Activated CD4-positive, alpha-beta T cell treated with anti-CD3 and anti-CD28 coated beads, Interleukin-2, amount 10 ng/mL, durations not matched to agents 24 days and 14 days (primary cell): ENCODE measurements at regions of chr14 and their contacts with region 1.

Region 1: GRCh38 chr14:71478542-71478941 is 453.7 kb upstream of the RGS6 start:
- DNase-seq: peak; percentile 77
- H3K4me3 Mint-ChIP-seq: peak overlapping the region; percentile 15
- H3K27ac Mint-ChIP-seq: peak overlapping the region; percentile 68
- H3K4me1 Mint-ChIP-seq: peaks cover 45% of the 10 kb centered on the region
- H3K27me3 Mint-ChIP-seq: no peaks in the 10 kb centered on the region

Region 2: GRCh38 chr14:71267007-71267513 is 211.5 kb before region 1 on chr14:
- intact Hi-C with region 1: no loop called
- DNase-seq: peak; percentile 67
- H3K4me3 Mint-ChIP-seq: peak overlapping the region; percentile 36
- H3K27ac Mint-ChIP-seq: peak overlapping the region; percentile 63
- H3K4me1 Mint-ChIP-seq: peaks cover 32% of the 10 kb centered on the region
- H3K27me3 Mint-ChIP-seq: peaks cover 9% of the 10 kb centered on the region

Region 3: DNA sequence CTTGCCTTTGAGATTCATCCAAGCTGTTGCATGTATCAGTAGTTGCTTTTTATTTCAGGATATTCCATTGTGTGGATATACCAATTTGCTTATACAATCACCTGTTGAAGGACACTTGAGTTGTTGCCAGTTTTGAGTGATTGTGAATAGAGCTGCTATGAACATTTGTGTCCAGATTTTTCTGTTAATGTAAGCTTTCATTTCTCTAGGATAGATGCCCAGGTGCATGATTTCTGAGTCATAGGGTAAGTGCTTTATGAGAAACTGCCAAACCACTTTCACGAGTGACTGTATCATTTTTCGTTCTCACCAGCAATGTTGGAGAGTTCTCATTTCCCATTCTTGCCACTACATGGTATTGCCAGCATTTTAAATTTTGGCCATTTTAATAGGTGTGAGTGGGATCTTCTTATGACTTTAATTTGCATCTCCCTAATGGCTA is 19.1 kb after region 1 on chr14:
- intact Hi-C with region 1: loop called (anchors 2 kb)
- DNase-seq: no peak
- H3K4me3 Mint-ChIP-seq: peak overlapping the region; percentile 20
- H3K27ac Mint-ChIP-seq: peak overlapping the region; percentile 37
- H3K4me1 Mint-ChIP-seq: peaks cover 20% of the 10 kb centered on the region
- H3K27me3 Mint-ChIP-seq: no peaks in the 10 kb centered on the region

Region 4: DNA sequence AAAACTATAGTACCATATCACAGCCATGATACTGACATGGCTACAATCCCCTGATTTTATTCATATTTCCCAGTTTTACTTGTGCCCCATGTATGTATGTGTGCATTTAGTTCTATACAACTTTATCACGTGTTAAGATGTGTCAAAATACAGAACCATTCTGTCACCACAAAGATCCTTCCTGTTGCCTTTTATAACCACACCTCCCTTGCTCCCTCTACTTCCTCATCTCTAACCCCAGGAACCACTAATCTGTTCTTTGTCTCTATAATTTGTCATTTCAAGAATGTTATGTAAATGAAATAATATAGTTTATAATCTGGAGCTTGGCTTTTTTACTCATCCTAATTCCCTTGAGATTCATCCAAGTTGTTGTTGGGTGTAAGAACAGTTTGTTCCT is 1056.9 kb after region 1 on chr14:
- intact Hi-C with region 1: no loop called
- DNase-seq: peak; percentile 68
- H3K4me3 Mint-ChIP-seq: peak overlapping the region; percentile 34
- H3K27ac Mint-ChIP-seq: peak overlapping the region; percentile 27
- H3K4me1 Mint-ChIP-seq: peaks cover 58% of the 10 kb centered on the region
- H3K27me3 Mint-ChIP-seq: peaks cover 16% of the 10 kb centered on the region